ENCODE measurements at regions of chr14 and their contacts with region 1.

Region 1: GRCh38 chr14:75542588-75543091 is 20.4 kb downstream of the BATF start:
- DNase-seq: peak; percentile 83
- ATAC-seq: peak; percentile 79
- H3K4me3 ChIP-seq: peak overlapping the region; percentile 7 to 54 (median 34)
- H3K4me3 Mint-ChIP-seq: peak overlapping the region; percentile 78
- H3K27ac ChIP-seq: peak overlapping the region; percentile 61 to 88
- H3K27ac Mint-ChIP-seq: peak overlapping the region; percentile 94
- H3K4me1 ChIP-seq: peaks cover 34 to 52% of the 10 kb centered on the region in 2 donors
- H3K4me1 Mint-ChIP-seq: peaks cover 50% of the 10 kb centered on the region
- H3K27me3 ChIP-seq: no peaks in the 10 kb centered on the region
- H3K27me3 Mint-ChIP-seq: no peaks in the 10 kb centered on the region
- CTCF ChIP-seq: no peak

Region 2: GRCh38 chr14:75497191-75497590 is 45.4 kb before region 1 on chr14:
- CTCF ChIA-PET with region 1: interaction called, 6 read pairs
- POLR2A ChIA-PET with region 1: no interaction called
- intact Hi-C with region 1: loop called (anchors 10 kb)
- DNase-seq: peak; percentile 45
- ATAC-seq: peak; percentile 82
- H3K4me3 ChIP-seq: no peak overlapping the region
- H3K4me3 Mint-ChIP-seq: peak overlapping the region; percentile 23
- H3K27ac ChIP-seq: no peak overlapping the region
- H3K27ac Mint-ChIP-seq: no peak overlapping the region
- H3K4me1 ChIP-seq: peaks cover 10 to 23% of the 10 kb centered on the region in 2 donors
- H3K4me1 Mint-ChIP-seq: peaks cover 33% of the 10 kb centered on the region
- H3K27me3 ChIP-seq: no peaks in the 10 kb centered on the region
- H3K27me3 Mint-ChIP-seq: no peaks in the 10 kb centered on the region
- CTCF ChIP-seq: no peak

Region 3: DNA sequence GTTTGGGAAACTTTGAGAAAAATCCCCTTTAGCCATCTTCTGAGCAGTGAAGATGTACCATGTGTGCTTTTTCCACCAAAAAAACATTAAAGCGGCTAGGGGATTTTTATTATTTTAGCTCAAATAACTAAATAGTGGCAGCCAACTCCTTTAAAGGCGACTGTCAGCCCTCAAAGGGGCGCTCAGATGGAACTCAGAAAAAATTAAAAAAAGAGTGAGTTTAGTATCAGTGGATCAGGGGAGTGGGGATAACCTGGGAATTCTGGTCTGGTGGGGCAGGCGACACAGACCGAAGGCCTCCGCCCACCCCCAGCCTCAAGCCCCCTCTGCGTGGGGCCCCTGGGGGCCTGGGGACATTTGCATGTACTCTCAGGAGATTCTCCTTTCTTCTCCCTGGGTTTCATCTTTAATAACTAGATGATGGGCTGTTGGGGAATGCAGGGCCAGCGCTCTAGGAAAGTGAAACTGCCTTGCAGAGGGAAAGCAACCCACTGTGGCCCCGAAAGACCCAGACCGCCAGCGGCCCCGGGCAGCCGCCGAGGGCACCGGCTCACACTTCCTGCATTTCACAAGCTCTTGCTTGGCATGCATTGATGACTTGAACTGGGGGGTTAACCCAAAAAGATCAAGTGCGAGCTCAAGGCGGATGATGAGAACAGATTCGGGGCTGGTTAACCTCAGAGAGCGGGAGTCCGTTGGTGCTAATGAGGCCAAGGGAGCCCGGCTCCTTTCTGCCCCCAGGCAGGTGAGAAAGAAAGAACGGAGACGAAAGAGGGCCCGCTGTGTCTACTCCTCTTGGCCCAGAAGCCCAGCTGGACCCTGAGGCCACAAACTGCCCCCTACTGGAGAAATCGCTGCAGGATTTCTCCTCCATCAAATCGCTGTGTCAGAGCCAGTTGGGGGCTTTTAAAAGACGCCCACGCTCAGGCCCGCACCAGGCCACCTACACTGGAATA is 27.7 kb before region 1 on chr14:
- CTCF ChIA-PET with region 1: interaction called, 46 read pairs
- POLR2A ChIA-PET with region 1: interaction called, 3 read pairs
- intact Hi-C with region 1: loop called (anchors 1 kb)
- DNase-seq: peak; percentile 78
- ATAC-seq: peak; percentile 54
- H3K4me3 ChIP-seq: peak overlapping the region; percentile 29 to 62 (median 45)
- H3K4me3 Mint-ChIP-seq: peak overlapping the region; percentile 91
- H3K27ac ChIP-seq: peak overlapping the region; percentile 15 to 55
- H3K27ac Mint-ChIP-seq: peak overlapping the region; percentile 95
- H3K4me1 ChIP-seq: peaks cover 29 to 36% of the 10 kb centered on the region in 2 donors
- H3K4me1 Mint-ChIP-seq: peaks cover 47% of the 10 kb centered on the region
- H3K27me3 ChIP-seq: no peaks in the 10 kb centered on the region
- H3K27me3 Mint-ChIP-seq: no peaks in the 10 kb centered on the region
- CTCF ChIP-seq: peak; percentile 74

Region 4: DNA sequence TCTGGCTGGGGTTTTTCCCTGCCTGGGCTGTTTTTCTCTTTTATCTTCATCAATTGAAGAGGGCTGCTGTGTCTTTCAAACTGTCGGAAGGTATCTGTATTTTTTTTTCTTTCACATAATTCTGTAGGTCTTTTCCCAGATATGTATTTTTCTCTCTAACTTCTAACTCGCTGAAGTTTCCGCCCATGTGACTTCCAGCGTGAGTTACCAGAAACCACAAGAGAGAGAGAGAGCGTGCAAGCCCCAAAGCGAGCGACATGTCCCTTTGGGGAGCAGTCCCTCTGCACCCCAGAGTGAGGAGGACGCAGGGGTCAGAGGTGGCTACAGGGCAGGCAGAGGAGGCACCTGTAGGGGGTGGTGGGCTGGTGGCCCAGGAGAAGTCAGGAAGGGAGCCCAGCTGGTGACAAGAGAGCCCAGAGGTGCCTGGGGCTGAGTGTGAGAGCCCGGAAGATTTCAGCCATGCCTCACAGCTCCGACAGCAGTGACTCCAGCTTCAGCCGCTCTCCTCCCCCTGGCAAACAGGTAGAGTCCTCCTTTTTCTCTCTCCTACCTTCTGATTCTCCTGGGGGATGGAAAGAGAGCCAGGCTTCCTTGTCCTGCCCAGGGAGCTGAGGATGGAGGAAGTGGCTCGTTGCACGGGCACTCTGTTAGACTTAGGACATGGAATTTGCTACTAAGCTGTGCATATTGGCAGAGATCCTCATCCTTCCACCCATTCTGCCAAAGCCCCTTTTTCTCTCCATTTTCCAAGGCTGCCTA is 20.2 kb before region 1 on chr14 and contains the start of gene BATF:
- CTCF ChIA-PET with region 1: interaction called, 46 read pairs
- POLR2A ChIA-PET with region 1: interaction called, 8 read pairs
- intact Hi-C with region 1: loop called (anchors 2 kb)
- DNase-seq: peak; percentile 83
- ATAC-seq: peak; percentile 71
- H3K4me3 ChIP-seq: peak within 1 kb of the TSS; percentile 53 to 80 (median 78)
- H3K4me3 Mint-ChIP-seq: peak within 1 kb of the TSS; percentile 99
- H3K27ac ChIP-seq: peak within 1 kb of the TSS; percentile 68 to 78
- H3K27ac Mint-ChIP-seq: peak within 1 kb of the TSS; percentile 98
- H3K4me1 ChIP-seq: peaks cover 35 to 51% of the 10 kb centered on the region in 2 donors
- H3K4me1 Mint-ChIP-seq: peaks cover 69% of the 10 kb centered on the region
- H3K27me3 ChIP-seq: no peaks in the 10 kb centered on the region
- H3K27me3 Mint-ChIP-seq: no peaks in the 10 kb centered on the region
- CTCF ChIP-seq: no peak
- total RNA-seq, gene BATF: 13.9 and 16.4 TPM in 2 replicates

Measured in B cell (primary cell).